ENCODE measurements at regions of chr15 and their contacts with region 1.

Region 1: GRCh38 chr15:88904624-88905327 is 8.4 kb downstream of the MFGE8 start:
- DNase-seq: peak; percentile 74
- H3K4me3 ChIP-seq: no peak overlapping the region
- H3K27ac ChIP-seq: peak overlapping the region in 1 of 2 donors; percentile 10
- H3K4me1 ChIP-seq: no peaks in the 10 kb centered on the region
- H3K27me3 ChIP-seq: no peaks in the 10 kb centered on the region
- CTCF ChIP-seq: peak; percentile 90 to 98 (median 95)
- POLR2A ChIP-seq: no peak

Region 2: GRCh38 chr15:88800026-88800425 is 104.8 kb before region 1 on chr15:
- intact Hi-C with region 1: no loop called
- DNase-seq: no peak
- H3K4me3 ChIP-seq: no peak overlapping the region
- H3K27ac ChIP-seq: no peak overlapping the region
- H3K4me1 ChIP-seq: no peaks in the 10 kb centered on the region
- H3K27me3 ChIP-seq: peaks cover 23% of the 10 kb centered on the region
- CTCF ChIP-seq: no peak
- POLR2A ChIP-seq: no peak

Region 3: GRCh38 chr15:88849376-88850072 is 55.3 kb before region 1 on chr15:
- intact Hi-C with region 1: no loop called
- DNase-seq: no peak
- H3K4me3 ChIP-seq: no peak overlapping the region
- H3K27ac ChIP-seq: no peak overlapping the region
- H3K4me1 ChIP-seq: no peaks in the 10 kb centered on the region
- H3K27me3 ChIP-seq: no peaks in the 10 kb centered on the region
- CTCF ChIP-seq: no peak
- POLR2A ChIP-seq: no peak

Region 4: DNA sequence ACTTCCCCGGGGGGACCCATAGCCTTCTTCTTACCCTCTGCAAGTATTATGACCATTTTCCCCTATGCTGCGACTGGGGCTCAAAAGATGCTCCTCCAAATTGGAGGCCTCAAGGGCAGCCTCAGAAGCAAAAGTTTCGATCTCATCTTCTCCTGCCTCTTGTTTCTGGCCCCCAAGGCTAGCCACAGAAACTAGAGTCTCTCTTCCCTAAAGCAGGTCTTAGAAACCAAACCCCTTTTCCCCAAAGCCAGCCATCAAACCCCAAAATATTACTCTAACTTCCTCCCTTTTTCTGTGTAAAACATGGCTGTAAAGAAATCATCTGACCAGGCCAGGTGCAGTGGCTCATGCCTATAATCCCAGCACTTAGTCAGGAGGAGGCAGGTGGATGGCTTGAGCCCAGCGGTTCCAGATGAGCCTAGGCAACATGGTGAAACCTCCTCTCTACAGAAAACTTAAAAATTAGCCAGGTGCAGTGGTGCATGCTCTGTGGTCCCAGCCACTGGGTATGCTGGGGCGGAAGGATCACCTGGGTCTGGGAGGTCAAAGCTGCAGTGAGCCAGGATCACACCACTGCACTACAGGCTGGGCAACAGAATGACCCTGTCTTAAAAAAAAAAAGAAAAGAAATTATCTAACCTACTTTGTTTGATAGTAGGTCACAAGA is 45.1 kb after region 1 on chr15:
- intact Hi-C with region 1: no loop called
- DNase-seq: no peak
- H3K4me3 ChIP-seq: no peak overlapping the region
- H3K27ac ChIP-seq: no peak overlapping the region
- H3K4me1 ChIP-seq: no peaks in the 10 kb centered on the region
- H3K27me3 ChIP-seq: no peaks in the 10 kb centered on the region
- CTCF ChIP-seq: no peak
- POLR2A ChIP-seq: no peak

Region 5: DNA sequence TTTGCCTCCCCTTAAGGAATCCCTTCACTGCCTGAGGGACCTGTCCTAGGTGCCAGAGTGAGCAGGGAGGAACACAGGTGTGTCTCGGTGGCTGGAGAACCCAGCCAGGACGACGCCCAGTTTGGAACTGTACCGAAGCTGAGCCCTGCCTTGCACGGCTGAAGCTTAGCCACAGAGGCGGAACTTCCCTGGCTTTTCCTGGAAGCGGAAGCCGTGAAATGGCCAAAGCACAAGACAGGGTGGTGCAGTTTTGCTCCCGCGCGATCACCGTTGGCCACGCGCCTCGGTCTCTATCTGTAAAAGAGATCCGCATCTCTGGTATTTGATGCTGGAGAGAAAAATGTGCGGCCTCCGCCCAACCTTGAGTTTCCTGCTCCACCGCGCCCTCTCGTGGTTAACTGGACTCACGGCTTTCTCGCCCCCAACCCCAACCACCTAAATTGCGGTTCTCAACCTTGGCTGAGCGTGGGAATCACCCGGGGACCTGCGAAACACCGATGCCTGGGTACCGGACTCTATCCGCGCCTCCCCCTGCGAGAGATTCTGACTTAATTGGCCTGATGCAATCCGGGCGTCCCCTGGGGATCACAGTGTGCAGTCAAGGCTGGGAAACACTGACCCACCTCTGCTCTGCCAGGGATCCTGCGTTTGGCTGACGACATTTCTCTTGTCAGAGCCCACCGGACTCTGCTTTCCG is 112.7 kb after region 1 on chr15:
- intact Hi-C with region 1: loop called (anchors 5 kb)
- DNase-seq: peak; percentile 60
- H3K4me3 ChIP-seq: no peak overlapping the region
- H3K27ac ChIP-seq: peak overlapping the region; percentile 35 to 54
- H3K4me1 ChIP-seq: no peaks in the 10 kb centered on the region
- H3K27me3 ChIP-seq: no peaks in the 10 kb centered on the region
- CTCF ChIP-seq: peak; percentile 67 to 79 (median 72)
- POLR2A ChIP-seq: no peak

Region 6: DNA sequence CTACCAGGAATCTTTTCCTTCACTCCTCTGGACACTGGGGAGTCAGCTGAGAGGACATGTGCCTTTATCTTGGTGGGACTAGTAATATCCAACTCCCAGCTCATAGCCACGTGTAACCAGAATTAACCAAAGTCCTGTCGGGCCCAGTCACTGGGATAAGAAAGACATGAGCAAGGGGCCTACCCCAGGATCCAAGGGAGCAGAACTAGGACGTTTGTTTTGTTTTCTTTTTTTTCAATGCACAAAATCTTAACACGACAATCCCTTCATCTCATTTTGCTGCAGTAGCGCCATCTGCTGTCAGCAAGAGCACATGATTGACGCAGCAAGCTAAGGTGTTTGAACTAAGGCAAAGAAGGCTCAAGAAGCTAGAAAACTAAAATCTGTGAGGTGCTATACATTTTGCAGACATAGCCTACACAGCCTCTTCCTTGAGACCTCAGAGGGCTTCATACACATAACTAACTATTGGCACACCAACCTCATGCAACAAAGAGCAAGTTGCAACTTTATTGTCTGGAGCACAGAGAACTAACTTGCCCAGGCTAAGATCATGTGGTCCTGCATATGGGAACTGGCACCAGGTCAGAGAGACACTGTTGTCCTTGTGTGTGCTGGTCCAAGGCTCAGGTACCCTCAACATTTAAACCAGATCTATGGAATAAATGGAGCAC is 273.0 kb after region 1 on chr15:
- intact Hi-C with region 1: loop called (anchors 2 kb)
- DNase-seq: peak; percentile 64
- H3K4me3 ChIP-seq: no peak overlapping the region
- H3K27ac ChIP-seq: no peak overlapping the region
- H3K4me1 ChIP-seq: peaks cover 3% of the 10 kb centered on the region
- H3K27me3 ChIP-seq: no peaks in the 10 kb centered on the region
- CTCF ChIP-seq: peak; percentile 75 to 88 (median 87)
- POLR2A ChIP-seq: no peak

Measured in prostate gland (tissue), 2 donors.